ENCODE measurements at regions of chr12 and their contacts with region 1.

Region 1: GRCh38 chr12:10130042-10130441 is at the start of gene CLEC7A:
- DNase-seq: no peak
- H3K4me3 ChIP-seq: no peak within 1 kb of the TSS
- H3K27ac ChIP-seq: no peak within 1 kb of the TSS
- H3K4me1 ChIP-seq: no peaks in the 10 kb centered on the region
- H3K27me3 ChIP-seq: no peaks in the 10 kb centered on the region
- CTCF ChIP-seq: no peak
- POLR2A ChIP-seq: no peak
- total RNA-seq, gene CLEC7A: 1.9 to 4.4 TPM

Region 2: GRCh38 chr12:10033783-10034545 is 96.1 kb before region 1 on chr12:
- intact Hi-C with region 1: loop called (anchors 10 kb)
- DNase-seq: no peak
- H3K4me3 ChIP-seq: no peak overlapping the region
- H3K27ac ChIP-seq: no peak overlapping the region
- H3K4me1 ChIP-seq: no peaks in the 10 kb centered on the region
- H3K27me3 ChIP-seq: no peaks in the 10 kb centered on the region
- CTCF ChIP-seq: peak; percentile 24 to 64 (median 52)
- POLR2A ChIP-seq: no peak

Region 3: GRCh38 chr12:10196210-10196609 is 66.2 kb after region 1 on chr12:
- intact Hi-C with region 1: no loop called
- DNase-seq: no peak
- H3K4me3 ChIP-seq: no peak overlapping the region
- H3K27ac ChIP-seq: no peak overlapping the region
- H3K4me1 ChIP-seq: no peaks in the 10 kb centered on the region
- H3K27me3 ChIP-seq: no peaks in the 10 kb centered on the region
- CTCF ChIP-seq: no peak
- POLR2A ChIP-seq: no peak

Region 4: DNA sequence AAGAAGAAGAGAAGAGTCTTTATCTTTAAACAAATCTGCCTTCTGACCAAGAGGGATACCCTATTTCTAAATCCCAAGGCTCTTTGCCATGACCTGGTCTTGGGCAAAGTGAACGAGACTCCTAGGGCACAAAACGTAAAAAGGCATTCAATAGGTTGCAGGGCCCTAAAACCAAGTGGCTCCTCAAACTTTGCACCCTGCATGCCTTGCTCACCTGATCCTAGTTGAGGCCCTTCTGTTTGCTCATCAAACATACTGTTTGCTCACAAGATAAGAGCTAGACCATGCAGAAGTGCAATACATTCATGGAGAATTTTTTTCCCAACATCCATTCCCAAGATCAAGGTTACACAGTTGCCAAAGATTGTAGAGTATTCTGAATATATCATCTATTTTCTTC is 761.9 kb after region 1 on chr12:
- intact Hi-C with region 1: no loop called
- DNase-seq: no peak
- H3K4me3 ChIP-seq: no peak overlapping the region
- H3K27ac ChIP-seq: no peak overlapping the region
- H3K4me1 ChIP-seq: no peaks in the 10 kb centered on the region
- H3K27me3 ChIP-seq: no peaks in the 10 kb centered on the region
- CTCF ChIP-seq: no peak
- POLR2A ChIP-seq: no peak